ENCODE measurements at regions of chr17 and their contacts with region 1.

Region 1: GRCh38 chr17:80008383-80008840 is 27.3 kb downstream of the TBC1D16 start:
- DNase-seq: peak; percentile 81
- H3K4me3 Mint-ChIP-seq: no peak overlapping the region
- H3K27ac Mint-ChIP-seq: no peak overlapping the region
- H3K4me1 Mint-ChIP-seq: peaks cover 7% of the 10 kb centered on the region
- H3K27me3 Mint-ChIP-seq: no peaks in the 10 kb centered on the region
- CTCF ChIP-seq: peak; percentile 93

Region 2: DNA sequence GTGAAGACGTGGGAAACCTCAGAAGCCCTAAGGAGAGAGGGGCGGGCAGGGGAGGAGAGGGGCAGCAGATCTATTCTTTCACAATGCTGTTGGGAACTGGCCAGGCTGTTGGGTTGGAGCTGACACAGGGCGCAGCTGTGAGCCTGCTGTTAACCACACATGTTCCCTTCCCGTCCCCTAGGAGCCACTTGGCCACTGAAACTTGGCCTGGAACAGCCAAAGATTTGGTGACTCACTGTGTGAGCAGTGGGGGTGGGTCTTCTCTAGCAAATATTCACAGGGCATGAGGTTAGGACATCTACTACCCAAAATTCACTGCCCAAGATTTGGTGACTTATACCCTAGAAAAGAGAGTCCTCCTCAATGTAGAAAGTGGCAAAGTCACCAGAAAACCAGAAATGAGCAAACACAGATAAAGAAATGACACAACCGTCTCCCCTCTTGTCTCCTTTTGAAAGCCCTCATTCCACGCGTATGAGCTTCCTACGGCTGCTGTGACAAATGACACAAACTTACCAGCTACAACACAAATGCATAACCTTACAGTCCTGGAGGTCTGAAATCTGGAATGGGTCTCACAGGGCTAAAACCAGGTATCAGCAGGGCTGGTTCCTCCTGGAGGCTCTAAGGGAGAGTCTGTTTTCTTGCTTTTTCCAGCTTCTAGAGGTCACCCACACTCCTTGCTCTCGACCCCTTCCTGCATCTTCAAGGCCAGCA is 21.0 kb after region 1 on chr17:
- CTCF ChIA-PET with region 1: interaction called, 29 read pairs
- POLR2A ChIA-PET with region 1: interaction called, 11 read pairs
- intact Hi-C with region 1: no loop called
- DNase-seq: peak; percentile 95
- H3K4me3 Mint-ChIP-seq: peak overlapping the region; percentile 53
- H3K27ac Mint-ChIP-seq: peak overlapping the region; percentile 93
- H3K4me1 Mint-ChIP-seq: peaks cover 36% of the 10 kb centered on the region
- H3K27me3 Mint-ChIP-seq: no peaks in the 10 kb centered on the region
- CTCF ChIP-seq: no peak

Region 3: GRCh38 chr17:80035943-80036714 is 27.7 kb after region 1 on chr17 and contains the start of gene CCDC40:
- CTCF ChIA-PET with region 1: interaction called, 23 read pairs
- POLR2A ChIA-PET with region 1: interaction called, 9 read pairs
- intact Hi-C with region 1: loop called (anchors 1 kb)
- DNase-seq: peak; percentile 70
- H3K4me3 Mint-ChIP-seq: peak within 1 kb of the TSS; percentile 93
- H3K27ac Mint-ChIP-seq: peak within 1 kb of the TSS; percentile 94
- H3K4me1 Mint-ChIP-seq: peaks cover 21% of the 10 kb centered on the region
- H3K27me3 Mint-ChIP-seq: no peaks in the 10 kb centered on the region
- CTCF ChIP-seq: no peak
- total RNA-seq, gene CCDC40: 4.1 and 4.8 TPM in 2 replicates

Region 4: DNA sequence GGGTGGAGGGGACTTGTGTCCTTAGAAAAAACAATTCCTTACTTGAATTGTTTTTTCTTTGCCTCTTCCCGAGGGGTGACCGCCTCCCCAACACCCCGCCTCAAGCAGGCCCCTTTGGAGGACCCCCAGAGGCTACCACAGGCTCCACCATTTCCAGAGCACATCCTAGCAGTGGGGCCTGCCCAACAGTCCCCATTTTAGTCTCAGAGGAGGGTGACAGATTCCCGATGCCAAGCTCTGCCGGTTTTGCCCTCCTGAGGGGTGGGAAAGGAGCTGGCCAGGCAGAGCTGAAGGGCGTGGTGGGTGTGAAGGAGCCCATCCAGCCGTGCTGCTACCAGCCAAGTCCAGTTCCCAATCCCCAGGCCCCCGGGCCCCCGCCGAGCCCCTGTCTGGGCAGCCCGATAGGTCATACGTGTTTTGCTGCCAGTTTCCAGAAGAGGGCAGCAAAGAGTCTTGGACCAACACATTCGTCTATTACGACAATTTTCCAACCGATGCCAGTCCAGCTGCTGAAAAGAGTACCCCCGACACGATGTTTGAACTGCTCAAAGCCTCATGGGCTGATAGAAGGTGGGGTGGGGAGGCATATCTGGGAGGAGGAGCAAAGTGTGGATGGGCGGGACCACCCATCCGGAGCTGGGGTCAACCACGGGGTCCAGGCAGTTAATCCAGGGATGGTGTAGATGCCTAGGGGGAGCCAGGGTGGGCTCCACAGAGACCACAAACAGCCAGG is 74.2 kb after region 1 on chr17:
- CTCF ChIA-PET with region 1: interaction called, 7 read pairs
- POLR2A ChIA-PET with region 1: interaction called, 4 read pairs
- intact Hi-C with region 1: loop called (anchors 1 kb)
- DNase-seq: peak; percentile 72
- H3K4me3 Mint-ChIP-seq: no peak overlapping the region
- H3K27ac Mint-ChIP-seq: no peak overlapping the region
- H3K4me1 Mint-ChIP-seq: no peaks in the 10 kb centered on the region
- H3K27me3 Mint-ChIP-seq: peaks cover 21% of the 10 kb centered on the region
- CTCF ChIP-seq: peak; percentile 65

Measured in MCF 10A (cell line).